MCF 10A (cell line): ENCODE measurements at regions of chr6 and their contacts with region 1.

Region 1: DNA sequence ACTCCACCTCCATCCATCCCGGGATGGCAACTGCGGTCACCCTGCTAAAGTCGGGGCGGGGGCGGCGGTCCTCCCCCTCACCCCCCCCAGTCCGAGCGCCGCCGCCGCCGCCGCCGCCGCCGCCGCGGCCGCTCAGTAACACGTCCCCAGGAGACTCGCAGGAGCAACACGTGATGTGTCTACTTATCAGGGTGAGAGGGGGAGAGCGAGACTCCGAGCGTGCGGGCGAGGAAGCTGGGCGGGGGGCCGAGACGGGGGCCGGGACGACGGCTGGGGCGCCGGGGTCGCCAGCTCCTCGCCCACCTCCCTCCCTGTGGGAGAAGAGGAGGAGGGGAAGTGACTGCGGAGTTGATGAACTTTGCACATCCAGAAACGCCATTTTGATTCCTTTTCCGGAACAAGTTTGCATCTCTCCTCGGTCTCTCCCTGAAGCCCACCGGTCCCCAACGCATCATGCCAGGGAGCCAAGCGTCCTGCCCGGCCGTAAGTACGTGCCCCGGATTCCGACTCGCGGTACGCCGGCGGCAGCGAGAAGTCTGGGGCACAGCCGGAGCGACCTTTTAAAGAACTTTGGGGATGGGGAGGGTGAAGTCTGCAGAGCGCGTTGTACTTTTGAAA is at the start of gene RREB1:
- DNase-seq: peak; percentile 52
- H3K4me3 Mint-ChIP-seq: peak within 1 kb of the TSS; percentile 92
- H3K27ac Mint-ChIP-seq: peak within 1 kb of the TSS; percentile 61
- H3K4me1 Mint-ChIP-seq: peaks cover 7% of the 10 kb centered on the region
- H3K27me3 Mint-ChIP-seq: no peaks in the 10 kb centered on the region
- CTCF ChIP-seq: no peak
- total RNA-seq, gene RREB1: 51.8 and 53.5 TPM in 2 replicates

Region 2: DNA sequence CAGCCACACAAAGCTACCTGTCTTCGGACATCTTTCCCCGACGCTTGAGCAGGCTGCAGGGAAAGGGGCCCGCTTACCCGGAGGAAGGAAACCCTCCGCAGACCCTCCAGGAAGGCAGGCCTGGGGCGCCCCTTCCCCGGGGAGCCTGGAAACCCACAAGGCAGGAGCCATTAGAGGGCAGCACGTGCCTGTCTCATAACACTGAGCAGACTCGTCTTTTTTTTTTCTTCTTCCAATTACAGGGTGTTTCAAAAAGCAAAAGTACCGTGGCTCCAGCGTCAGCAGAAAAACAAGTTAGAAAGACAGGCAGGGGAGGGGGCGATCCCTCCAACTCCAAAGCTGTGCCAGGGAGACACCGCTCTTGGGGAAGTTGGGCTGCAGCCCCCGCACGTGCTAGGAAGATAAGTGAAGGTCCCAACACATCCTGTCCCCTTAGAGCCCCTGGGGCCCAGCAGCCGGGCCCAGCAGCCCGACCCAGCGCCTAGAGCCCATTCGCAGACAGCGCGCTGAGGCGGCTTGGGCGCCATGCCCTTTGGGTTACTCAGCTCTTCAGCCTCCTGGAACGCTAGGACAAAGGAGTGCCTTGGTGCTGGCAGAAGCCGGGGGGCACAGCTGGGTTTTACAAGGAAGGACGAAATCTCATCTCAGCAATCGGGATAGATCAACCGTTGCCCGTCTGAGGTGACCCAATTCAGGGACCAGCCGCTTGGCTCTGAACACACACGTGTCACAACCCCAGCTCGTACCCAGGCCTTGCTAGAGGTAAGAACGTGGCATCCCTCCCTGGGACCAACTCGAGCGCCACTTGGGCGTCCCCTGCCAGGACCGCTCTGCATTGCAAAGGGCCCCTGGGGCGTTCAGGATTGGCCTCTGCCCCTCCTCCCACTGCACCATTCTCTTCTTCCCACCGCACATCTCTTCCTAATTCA is 382.9 kb before region 1 on chr6:
- CTCF ChIA-PET with region 1: interaction called, 6 read pairs
- POLR2A ChIA-PET with region 1: interaction called, 6 read pairs
- intact Hi-C with region 1: loop called (anchors 2 kb)
- DNase-seq: peak; percentile 77
- H3K4me3 Mint-ChIP-seq: peak overlapping the region; percentile 10
- H3K27ac Mint-ChIP-seq: peak overlapping the region; percentile 72
- H3K4me1 Mint-ChIP-seq: peaks cover 6% of the 10 kb centered on the region
- H3K27me3 Mint-ChIP-seq: no peaks in the 10 kb centered on the region
- CTCF ChIP-seq: peak; percentile 82

Region 3: DNA sequence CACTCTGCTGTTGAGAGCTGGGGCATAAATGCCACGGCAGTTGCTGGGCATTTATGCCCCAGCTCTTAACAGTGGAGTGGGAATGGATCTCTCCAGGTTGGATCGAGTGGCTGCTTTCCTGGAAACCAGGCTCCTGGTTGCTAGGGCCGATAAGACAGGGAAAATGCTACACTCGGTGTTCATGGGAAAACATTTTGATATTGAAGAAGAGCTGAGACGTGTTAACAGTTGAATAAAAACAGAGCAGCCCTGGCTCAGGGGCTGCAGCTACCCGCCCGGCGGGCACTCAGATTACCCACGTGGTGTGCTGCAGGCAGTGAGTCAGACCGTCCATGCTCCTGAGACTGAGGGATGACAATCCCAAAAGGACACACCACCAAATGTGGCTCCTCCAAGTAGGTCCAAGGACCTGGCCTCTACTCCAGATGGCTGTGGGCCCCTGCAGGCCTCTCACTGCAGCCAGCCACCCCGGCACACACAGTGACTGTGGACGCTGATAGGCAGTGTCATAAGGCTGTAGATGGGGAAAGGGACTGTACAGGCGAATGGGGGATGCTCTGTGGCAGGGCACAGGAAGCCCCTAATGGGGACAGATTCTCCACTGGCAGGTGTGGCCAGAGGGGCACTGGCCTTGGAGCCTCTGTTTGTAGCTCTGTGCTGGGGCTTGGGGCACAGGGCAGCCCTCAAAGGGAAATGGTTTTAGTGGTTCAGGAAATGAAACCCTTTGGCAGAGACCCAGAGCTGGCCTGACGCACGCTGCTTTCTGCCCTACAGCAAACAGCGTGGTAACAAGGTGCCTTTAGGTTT is 281.4 kb before region 1 on chr6:
- CTCF ChIA-PET with region 1: no interaction called
- POLR2A ChIA-PET with region 1: interaction called, 12 read pairs
- intact Hi-C with region 1: no loop called
- DNase-seq: peak; percentile 81
- H3K4me3 Mint-ChIP-seq: no peak overlapping the region
- H3K27ac Mint-ChIP-seq: peak overlapping the region; percentile 92
- H3K4me1 Mint-ChIP-seq: peaks cover 40% of the 10 kb centered on the region
- H3K27me3 Mint-ChIP-seq: no peaks in the 10 kb centered on the region
- CTCF ChIP-seq: no peak

Region 4: DNA sequence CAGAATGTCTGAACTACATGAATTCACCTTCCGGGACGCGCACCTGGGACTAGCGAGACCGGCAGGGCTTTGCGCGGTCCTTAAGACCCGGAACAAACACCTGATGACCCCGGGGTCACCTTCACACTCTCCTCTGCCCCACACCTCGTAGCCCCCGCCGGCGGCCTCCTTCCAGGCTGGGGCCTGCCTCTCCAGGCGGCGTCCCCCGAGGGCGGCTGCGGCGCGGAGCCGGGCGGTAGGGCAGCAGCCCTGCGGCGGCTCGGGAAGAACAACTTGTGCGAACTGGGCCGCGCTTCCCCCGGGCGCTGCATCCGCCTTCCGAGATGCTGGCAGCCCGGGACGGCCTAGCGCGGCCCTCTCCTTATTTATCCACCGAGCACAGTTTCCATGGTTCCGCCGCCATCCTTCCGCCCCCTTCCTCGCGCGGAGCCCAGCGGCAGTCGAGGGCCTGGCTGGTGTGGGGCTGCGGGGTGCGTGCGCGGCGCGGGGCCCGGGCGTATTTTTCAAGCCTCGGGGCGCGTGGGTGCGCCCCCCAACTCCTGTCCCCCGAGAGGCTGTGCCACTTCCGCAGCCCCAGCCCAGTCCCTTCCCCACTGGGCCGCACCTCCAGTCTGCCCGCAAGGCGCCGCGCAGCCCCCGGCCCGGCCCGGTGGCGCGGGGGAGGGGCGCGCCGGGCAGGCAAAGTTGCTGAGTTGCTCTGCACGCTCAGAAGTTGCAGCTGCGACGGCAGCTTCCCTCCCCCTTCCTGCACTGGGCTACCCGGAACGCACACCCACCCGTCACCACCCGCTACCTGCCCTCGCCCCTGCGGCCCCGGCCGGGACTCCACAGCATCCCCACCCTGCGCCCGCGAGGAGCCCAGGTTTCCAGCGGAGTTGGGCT is 56.2 kb before region 1 on chr6:
- CTCF ChIA-PET with region 1: no interaction called
- POLR2A ChIA-PET with region 1: interaction called, 88 read pairs
- intact Hi-C with region 1: loop called (anchors 2 kb)
- DNase-seq: no peak
- H3K4me3 Mint-ChIP-seq: no peak overlapping the region
- H3K27ac Mint-ChIP-seq: peak overlapping the region; percentile 93
- H3K4me1 Mint-ChIP-seq: peaks cover 21% of the 10 kb centered on the region
- H3K27me3 Mint-ChIP-seq: no peaks in the 10 kb centered on the region
- CTCF ChIP-seq: no peak

Region 5: DNA sequence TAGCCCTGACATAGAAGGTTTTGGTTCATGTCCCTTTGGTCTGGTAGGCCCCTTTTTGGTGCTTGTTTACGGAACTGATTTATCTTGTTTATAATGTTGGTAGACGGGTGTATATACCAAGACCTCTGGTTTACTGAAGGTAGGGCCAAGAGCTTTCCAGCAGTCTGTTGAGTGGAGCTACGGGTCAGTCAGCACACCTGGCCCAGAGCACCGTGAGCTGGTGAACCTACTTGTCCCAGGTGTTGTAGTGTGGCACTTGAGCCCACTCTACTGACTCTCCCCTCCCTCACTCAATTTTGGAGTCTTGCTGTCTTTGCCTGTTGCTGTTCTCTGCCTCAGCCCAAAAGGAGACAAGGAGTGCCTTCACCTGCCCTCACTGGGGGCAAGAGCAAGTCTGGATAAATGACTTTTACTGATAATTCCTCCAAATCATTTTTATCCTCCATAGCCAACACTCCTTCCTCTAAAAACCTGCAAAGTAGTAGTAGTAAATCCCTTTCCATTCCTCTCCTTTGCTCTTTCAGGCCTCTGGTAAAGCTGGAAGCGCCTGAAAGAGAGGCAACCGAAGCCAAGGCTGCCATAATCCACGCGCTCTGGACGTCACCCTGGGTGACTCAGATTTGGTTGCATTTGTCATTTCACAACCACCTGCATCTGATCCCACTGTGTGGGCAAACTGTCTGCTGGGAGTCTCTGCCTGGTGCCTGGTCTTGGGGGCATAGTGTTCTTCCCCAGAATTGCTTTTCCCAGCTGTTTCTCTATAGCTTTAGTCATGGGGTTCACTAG is 22.3 kb after region 1 on chr6:
- CTCF ChIA-PET with region 1: interaction called, 6 read pairs
- POLR2A ChIA-PET with region 1: interaction called, 105 read pairs
- intact Hi-C with region 1: no loop called
- DNase-seq: peak; percentile 89
- H3K4me3 Mint-ChIP-seq: peak overlapping the region; percentile 20
- H3K27ac Mint-ChIP-seq: peak overlapping the region; percentile 84
- H3K4me1 Mint-ChIP-seq: peaks cover 40% of the 10 kb centered on the region
- H3K27me3 Mint-ChIP-seq: no peaks in the 10 kb centered on the region
- CTCF ChIP-seq: no peak

Region 6: DNA sequence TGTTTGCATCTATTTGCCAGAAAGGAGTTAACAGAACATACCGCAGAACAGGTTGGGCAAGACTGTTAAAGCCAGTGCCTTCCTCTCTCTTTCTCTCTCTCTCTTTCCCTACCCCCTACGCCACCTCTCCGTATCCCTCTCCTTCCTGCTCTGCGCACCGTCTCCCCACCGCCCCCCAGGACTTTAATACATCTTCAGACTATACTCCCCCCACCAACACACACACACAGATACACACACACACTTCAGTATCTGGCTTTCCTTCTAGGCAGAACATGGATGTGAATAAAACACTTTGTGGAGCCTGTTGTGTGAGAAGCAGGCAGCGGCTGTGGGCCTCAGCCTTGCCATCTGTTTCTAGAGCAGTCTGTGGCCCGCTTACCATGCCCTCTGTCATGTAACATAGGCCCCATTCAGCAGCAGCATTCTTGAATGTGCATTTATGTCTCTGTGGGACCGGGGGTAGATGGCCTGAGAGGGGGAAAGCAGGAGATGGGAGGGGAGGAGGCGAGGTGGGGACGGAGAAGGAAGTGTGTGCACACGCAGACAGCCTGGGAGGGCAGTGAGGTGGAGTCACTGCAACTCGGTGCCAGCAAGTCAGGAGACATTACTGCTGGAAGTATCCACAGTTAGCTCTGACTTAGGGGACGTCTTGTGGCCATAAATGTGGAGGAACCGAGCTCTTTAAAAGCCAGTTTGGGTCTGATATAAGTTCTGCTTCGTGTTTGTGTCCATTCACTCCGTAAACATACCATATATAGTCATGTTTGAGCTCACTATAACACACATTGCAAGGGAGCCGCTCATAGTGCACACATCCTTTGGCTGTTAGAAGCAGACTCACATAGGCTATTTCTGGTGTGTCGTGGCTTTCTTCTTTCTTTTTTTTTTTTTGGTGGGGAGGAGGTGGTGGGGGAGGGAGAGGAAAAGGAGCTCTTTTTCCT is 38.5 kb after region 1 on chr6:
- CTCF ChIA-PET with region 1: interaction called, 3 read pairs
- POLR2A ChIA-PET with region 1: interaction called, 105 read pairs
- intact Hi-C with region 1: no loop called
- DNase-seq: no peak
- H3K4me3 Mint-ChIP-seq: peak overlapping the region; percentile 51
- H3K27ac Mint-ChIP-seq: peak overlapping the region; percentile 90
- H3K4me1 Mint-ChIP-seq: peaks cover 65% of the 10 kb centered on the region
- H3K27me3 Mint-ChIP-seq: no peaks in the 10 kb centered on the region
- CTCF ChIP-seq: no peak

Region 7: DNA sequence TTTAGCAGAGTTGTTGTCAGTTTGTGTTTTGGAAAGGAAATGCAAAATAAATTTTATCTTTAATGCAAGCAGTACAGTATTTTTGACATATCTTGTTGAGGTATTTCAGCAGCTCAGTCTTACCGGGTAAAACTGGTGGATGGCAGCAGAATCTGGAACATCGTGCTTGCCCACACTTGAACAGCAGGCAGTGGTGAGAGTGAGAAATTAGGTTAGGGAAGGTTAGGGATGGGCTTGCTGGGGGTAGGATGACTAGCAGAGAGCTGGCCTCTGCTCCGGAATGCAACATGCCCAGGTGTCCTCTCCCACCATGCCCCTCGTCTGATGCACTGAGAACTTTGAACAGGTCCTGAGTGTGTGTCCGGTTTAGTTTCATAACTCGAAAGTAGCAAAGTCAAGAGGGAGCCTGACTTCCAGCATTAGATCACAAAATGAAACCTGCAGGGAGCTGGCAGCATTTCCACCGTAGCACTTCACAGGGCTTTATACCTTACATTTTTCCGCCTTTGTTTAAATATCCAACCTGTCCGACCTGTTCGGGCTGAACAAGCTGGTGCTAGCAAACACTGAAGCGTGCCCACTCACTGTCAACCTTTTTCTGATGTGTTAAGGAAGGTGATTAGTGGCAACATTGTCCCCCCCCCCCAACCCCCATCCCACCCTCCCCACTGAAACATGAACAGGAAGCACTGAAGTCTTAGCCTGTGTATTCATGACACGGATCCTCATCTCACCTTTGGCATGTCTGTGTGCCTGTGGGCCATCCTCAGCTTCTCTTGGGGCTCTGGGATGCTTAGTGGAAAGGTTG is 93.4 kb after region 1 on chr6:
- CTCF ChIA-PET with region 1: no interaction called
- POLR2A ChIA-PET with region 1: no interaction called
- intact Hi-C with region 1: no loop called
- DNase-seq: no peak
- H3K4me3 Mint-ChIP-seq: no peak overlapping the region
- H3K27ac Mint-ChIP-seq: no peak overlapping the region
- H3K4me1 Mint-ChIP-seq: no peaks in the 10 kb centered on the region
- H3K27me3 Mint-ChIP-seq: no peaks in the 10 kb centered on the region
- CTCF ChIP-seq: no peak

Region 8: GRCh38 chr6:7424967-7425807 is 317.5 kb after region 1 on chr6:
- CTCF ChIA-PET with region 1: no interaction called
- POLR2A ChIA-PET with region 1: no interaction called
- intact Hi-C with region 1: no loop called
- DNase-seq: peak; percentile 80
- H3K4me3 Mint-ChIP-seq: no peak overlapping the region
- H3K27ac Mint-ChIP-seq: no peak overlapping the region
- H3K4me1 Mint-ChIP-seq: no peaks in the 10 kb centered on the region
- H3K27me3 Mint-ChIP-seq: no peaks in the 10 kb centered on the region
- CTCF ChIP-seq: peak; percentile 61